ENCODE measurements at regions of chr22 and their contacts with region 1.

Region 1: DNA sequence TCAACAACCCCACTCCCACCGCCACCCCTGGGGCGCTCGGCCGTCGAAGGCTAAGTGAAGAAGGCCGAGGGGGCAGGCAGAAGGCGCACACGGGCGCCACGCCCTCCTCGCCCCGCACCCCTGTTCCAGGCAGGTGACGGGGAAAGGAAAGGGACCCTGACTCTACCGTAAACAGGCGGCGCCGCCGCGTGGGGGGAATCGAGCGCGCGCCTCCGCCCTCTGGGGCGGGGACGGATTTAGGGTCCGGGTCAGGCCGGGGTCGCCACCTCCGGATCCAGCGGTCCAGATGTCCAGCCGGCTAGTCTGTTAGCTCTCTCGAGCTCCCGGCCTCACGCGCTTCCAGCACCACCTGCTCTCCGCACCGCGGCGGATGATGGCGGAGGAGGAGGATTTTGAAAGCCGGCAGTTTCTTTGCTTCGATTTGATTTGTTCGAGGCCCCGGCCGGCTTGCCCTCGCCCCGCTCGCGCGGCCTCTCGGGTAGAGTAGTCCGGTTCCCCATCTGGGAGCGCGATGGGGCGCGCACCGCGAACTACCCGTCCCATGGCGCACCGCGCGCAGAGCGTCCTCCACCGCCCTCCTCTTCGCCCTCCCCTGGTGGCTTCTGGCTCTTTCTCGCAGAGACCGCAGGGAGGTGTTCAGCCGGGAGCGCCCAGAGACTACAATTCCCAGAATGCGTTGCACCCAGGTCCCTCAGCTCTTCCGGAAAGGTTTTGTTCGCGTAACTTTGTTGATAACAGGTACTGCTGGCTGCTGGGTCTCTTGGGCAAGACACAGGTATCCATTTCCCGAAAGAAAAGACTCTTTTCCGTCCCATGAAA is at the start of gene RANGAP1:
- DNase-seq: peak; percentile 96 to 99 (median 98)
- H3K4me3 ChIP-seq: peak within 1 kb of the TSS; percentile 83
- H3K4me3 Mint-ChIP-seq: peak within 1 kb of the TSS; percentile 93 to 100 (median 96)
- H3K27ac ChIP-seq: peak within 1 kb of the TSS; percentile 95
- H3K27ac Mint-ChIP-seq: peak within 1 kb of the TSS; percentile 98 to 99 (median 98)
- H3K4me1 ChIP-seq: peaks cover 16% of the 10 kb centered on the region
- H3K4me1 Mint-ChIP-seq: peaks cover 26 to 42% (median 37%) of the 10 kb centered on the region in 3 donors
- H3K27me3 ChIP-seq: no peaks in the 10 kb centered on the region
- H3K27me3 Mint-ChIP-seq: no peaks in the 10 kb centered on the region
- total RNA-seq, gene RANGAP1: 170 to 182 TPM

Region 2: DNA sequence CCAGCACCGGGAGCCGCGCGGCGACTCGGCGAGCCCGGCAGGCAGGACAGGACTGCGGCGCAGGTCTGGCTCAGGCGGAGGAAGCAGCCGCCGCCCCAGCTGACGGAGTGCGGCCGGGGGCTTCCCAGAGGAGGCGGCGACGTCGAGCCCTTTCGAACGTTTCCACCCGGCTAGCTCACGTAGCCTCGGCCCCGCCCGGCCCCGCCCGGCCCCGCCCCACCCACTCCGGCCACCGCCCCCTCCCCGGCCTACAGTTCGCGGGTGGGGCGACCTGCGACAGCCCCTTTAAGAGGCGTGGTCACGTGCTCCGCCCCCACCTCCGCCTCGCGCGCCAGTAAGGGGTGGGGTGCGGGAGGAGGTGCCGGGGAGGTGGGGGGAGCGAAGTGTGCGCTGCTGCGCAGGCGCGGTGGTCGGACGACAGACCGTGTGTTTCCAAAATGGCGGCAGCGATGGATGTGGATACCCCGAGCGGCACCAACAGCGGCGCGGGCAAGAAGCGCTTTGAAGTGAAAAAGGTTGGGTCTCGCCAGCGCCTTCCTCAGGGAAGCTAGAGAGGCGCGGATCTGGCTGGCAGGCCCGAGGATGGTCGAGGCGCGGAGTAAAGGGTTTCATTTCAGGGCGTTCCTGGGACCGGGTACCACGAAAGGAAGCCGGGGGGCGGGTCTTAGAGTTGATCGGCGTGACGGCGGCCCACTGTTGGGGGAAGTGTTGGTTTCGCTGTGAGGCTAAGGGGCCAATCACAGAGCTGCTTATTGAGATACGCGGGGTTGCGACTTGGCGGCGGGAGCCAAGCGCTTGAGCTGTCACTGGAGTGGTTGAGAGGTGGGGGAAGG is 334.9 kb before region 1 on chr22 and contains the start of gene RBX1:
- CTCF ChIA-PET with region 1: no interaction called
- POLR2A ChIA-PET with region 1: interaction called, 12 read pairs
- DNase-seq: peak; percentile 98 to 100 (median 99)
- H3K4me3 ChIP-seq: peak within 1 kb of the TSS; percentile 81
- H3K4me3 Mint-ChIP-seq: peak within 1 kb of the TSS; percentile 92 to 100 (median 98)
- H3K27ac ChIP-seq: peak within 1 kb of the TSS; percentile 98
- H3K27ac Mint-ChIP-seq: peak within 1 kb of the TSS; percentile 93 to 100 (median 99)
- H3K4me1 ChIP-seq: peaks cover 20% of the 10 kb centered on the region
- H3K4me1 Mint-ChIP-seq: peaks cover 31 to 48% (median 46%) of the 10 kb centered on the region in 3 donors
- H3K27me3 ChIP-seq: no peaks in the 10 kb centered on the region
- H3K27me3 Mint-ChIP-seq: peaks cover 0 to 6% of the 10 kb centered on the region in 2 donors
- total RNA-seq, gene RBX1: 88.3 to 88.8 TPM

Region 3: DNA sequence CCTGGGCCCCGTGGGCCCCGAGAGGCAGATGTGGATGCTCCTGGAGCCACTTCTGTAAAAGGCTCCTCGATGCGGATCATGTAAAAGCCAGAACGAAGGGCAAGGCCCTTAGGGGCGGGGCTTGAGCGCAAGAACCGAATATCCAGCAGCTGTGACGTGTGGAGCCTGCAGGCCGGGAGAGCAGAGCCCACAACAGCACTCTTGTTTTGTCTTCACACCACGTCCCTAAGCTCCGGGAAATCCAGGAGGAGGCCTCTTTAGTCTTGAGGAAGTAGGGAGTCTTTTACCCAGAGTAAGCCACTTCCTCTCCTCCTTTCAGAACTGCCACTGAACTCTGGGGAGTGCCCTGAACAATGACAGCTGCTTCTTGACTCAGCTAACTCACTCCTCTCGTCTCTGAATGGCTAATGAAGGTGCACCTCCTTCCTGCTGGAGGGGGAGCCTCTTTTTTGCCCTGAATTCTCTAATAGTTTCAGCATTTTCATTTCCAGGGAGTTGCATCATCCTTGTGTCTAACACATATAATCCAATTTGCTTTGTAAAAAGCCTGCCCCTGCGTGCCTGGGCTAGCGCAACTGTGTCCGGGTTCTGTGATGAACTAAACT is 68.4 kb before region 1 on chr22:
- CTCF ChIA-PET with region 1: no interaction called
- POLR2A ChIA-PET with region 1: no interaction called
- DNase-seq: peak in 1 of 5 donors; percentile 25
- H3K4me3 ChIP-seq: no peak overlapping the region
- H3K4me3 Mint-ChIP-seq: peak overlapping the region in 3 of 7 donors; percentile 23 to 33 (median 25)
- H3K27ac ChIP-seq: no peak overlapping the region
- H3K27ac Mint-ChIP-seq: peak overlapping the region in 6 of 8 donors; percentile 37 to 87 (median 62)
- H3K4me1 ChIP-seq: peaks cover 11% of the 10 kb centered on the region
- H3K4me1 Mint-ChIP-seq: peaks cover 12 to 22% (median 13%) of the 10 kb centered on the region in 3 donors
- H3K27me3 ChIP-seq: no peaks in the 10 kb centered on the region
- H3K27me3 Mint-ChIP-seq: no peaks in the 10 kb centered on the region

Region 4: GRCh38 chr22:41301105-41302020 is 15.3 kb after region 1 on chr22 and contains the start of gene ZC3H7B:
- CTCF ChIA-PET with region 1: interaction called, 7 read pairs
- POLR2A ChIA-PET with region 1: interaction called, 30 read pairs
- DNase-seq: peak; percentile 78 to 89 (median 81)
- H3K4me3 ChIP-seq: peak within 1 kb of the TSS; percentile 59
- H3K4me3 Mint-ChIP-seq: peak within 1 kb of the TSS; percentile 83 to 95 (median 90)
- H3K27ac ChIP-seq: peak within 1 kb of the TSS; percentile 81
- H3K27ac Mint-ChIP-seq: peak within 1 kb of the TSS; percentile 72 to 98 (median 93)
- H3K4me1 ChIP-seq: peaks cover 16% of the 10 kb centered on the region
- H3K4me1 Mint-ChIP-seq: peaks cover 26 to 36% (median 31%) of the 10 kb centered on the region in 3 donors
- H3K27me3 ChIP-seq: no peaks in the 10 kb centered on the region
- H3K27me3 Mint-ChIP-seq: no peaks in the 10 kb centered on the region
- total RNA-seq, gene ZC3H7B: 58.9 to 59.9 TPM

Region 5: GRCh38 chr22:41311487-41311886 is 25.5 kb after region 1 on chr22:
- CTCF ChIA-PET with region 1: interaction called, 3 read pairs
- POLR2A ChIA-PET with region 1: interaction called, 11 read pairs
- DNase-seq: no peak
- H3K4me3 ChIP-seq: no peak overlapping the region
- H3K4me3 Mint-ChIP-seq: no peak overlapping the region
- H3K27ac ChIP-seq: no peak overlapping the region
- H3K27ac Mint-ChIP-seq: peak overlapping the region in 5 of 8 donors; percentile 2 to 72 (median 52)
- H3K4me1 ChIP-seq: peaks cover 6% of the 10 kb centered on the region
- H3K4me1 Mint-ChIP-seq: peaks cover 23 to 31% (median 30%) of the 10 kb centered on the region in 3 donors
- H3K27me3 ChIP-seq: no peaks in the 10 kb centered on the region
- H3K27me3 Mint-ChIP-seq: peaks cover 0 to 2% of the 10 kb centered on the region in 2 donors

Region 6: GRCh38 chr22:41381329-41382097 is 95.5 kb after region 1 on chr22 and contains the start of gene TEF:
- CTCF ChIA-PET with region 1: no interaction called
- POLR2A ChIA-PET with region 1: interaction called, 22 read pairs
- DNase-seq: peak; percentile 97 to 99 (median 99)
- H3K4me3 ChIP-seq: peak within 1 kb of the TSS; percentile 75
- H3K4me3 Mint-ChIP-seq: peak within 1 kb of the TSS; percentile 87 to 98 (median 92)
- H3K27ac ChIP-seq: peak within 1 kb of the TSS; percentile 79
- H3K27ac Mint-ChIP-seq: peak within 1 kb of the TSS; percentile 78 to 98 (median 96)
- H3K4me1 ChIP-seq: peaks cover 6% of the 10 kb centered on the region
- H3K4me1 Mint-ChIP-seq: peaks cover 9 to 21% (median 20%) of the 10 kb centered on the region in 3 donors
- H3K27me3 ChIP-seq: no peaks in the 10 kb centered on the region
- H3K27me3 Mint-ChIP-seq: no peaks in the 10 kb centered on the region
- total RNA-seq, gene TEF: 1.8 to 3.5 TPM

Region 7: DNA sequence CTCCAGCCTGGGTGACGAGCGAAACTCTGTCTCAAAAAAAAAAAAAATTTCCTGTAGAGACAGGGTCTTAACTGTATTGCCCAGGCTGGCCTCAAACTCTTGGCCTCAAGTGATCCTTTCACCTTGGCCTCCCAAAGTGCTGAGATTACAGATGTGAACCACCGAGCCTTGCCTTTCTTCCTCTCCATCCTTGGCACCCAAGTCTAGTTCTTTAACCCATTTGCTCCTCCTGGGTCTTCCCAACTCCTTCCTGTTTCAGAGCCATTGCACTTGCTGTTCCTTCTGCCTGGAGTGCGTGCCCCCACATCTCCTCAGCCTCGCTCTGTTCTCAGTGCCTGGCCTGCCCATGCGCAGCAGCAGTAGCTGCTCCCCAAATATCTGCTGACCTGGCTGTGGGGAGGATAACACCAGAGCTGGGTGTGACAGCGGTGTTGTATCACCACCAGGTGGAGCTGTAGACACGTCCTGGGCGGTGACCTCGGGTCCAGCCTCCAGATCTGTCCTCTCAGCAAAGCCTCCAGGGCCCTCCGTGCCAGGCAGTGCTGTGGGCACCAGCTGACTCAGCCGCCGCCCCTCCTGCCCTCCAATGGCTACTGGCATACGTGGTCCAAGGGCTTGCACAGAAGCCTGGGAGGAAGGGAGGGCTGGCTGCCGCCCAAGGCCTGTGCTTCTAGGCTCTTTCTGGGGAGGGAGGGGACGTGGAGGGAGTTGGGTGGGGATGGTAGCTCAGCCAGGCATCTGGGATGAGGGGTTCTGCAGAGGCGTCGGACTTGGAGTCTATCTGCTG is 117.7 kb after region 1 on chr22:
- CTCF ChIA-PET with region 1: no interaction called
- POLR2A ChIA-PET with region 1: no interaction called
- DNase-seq: peak; percentile 70 to 88 (median 79)
- H3K4me3 ChIP-seq: no peak overlapping the region
- H3K4me3 Mint-ChIP-seq: peak overlapping the region in 1 of 7 donors; percentile 49
- H3K27ac ChIP-seq: no peak overlapping the region
- H3K27ac Mint-ChIP-seq: peak overlapping the region in 1 of 8 donors; percentile 51
- H3K4me1 ChIP-seq: no peaks in the 10 kb centered on the region
- H3K4me1 Mint-ChIP-seq: peaks cover 4 to 12% (median 5%) of the 10 kb centered on the region in 3 donors
- H3K27me3 ChIP-seq: no peaks in the 10 kb centered on the region
- H3K27me3 Mint-ChIP-seq: no peaks in the 10 kb centered on the region

Region 8: GRCh38 chr22:41448189-41448808 is 162.3 kb after region 1 on chr22:
- CTCF ChIA-PET with region 1: no interaction called
- POLR2A ChIA-PET with region 1: interaction called, 11 read pairs
- DNase-seq: peak; percentile 82 to 94 (median 90)
- H3K4me3 ChIP-seq: peak overlapping the region; percentile 96
- H3K4me3 Mint-ChIP-seq: peak overlapping the region; percentile 90 to 98 (median 95)
- H3K27ac ChIP-seq: peak overlapping the region; percentile 96
- H3K27ac Mint-ChIP-seq: peak overlapping the region; percentile 91 to 98 (median 96)
- H3K4me1 ChIP-seq: peaks cover 5% of the 10 kb centered on the region
- H3K4me1 Mint-ChIP-seq: peaks cover 20 to 27% (median 23%) of the 10 kb centered on the region in 3 donors
- H3K27me3 ChIP-seq: no peaks in the 10 kb centered on the region
- H3K27me3 Mint-ChIP-seq: no peaks in the 10 kb centered on the region

Measured in CD8-positive, alpha-beta memory T cell (primary cell).